ENCODE measurements at regions of chr9 and their contacts with region 1.

Region 1: DNA sequence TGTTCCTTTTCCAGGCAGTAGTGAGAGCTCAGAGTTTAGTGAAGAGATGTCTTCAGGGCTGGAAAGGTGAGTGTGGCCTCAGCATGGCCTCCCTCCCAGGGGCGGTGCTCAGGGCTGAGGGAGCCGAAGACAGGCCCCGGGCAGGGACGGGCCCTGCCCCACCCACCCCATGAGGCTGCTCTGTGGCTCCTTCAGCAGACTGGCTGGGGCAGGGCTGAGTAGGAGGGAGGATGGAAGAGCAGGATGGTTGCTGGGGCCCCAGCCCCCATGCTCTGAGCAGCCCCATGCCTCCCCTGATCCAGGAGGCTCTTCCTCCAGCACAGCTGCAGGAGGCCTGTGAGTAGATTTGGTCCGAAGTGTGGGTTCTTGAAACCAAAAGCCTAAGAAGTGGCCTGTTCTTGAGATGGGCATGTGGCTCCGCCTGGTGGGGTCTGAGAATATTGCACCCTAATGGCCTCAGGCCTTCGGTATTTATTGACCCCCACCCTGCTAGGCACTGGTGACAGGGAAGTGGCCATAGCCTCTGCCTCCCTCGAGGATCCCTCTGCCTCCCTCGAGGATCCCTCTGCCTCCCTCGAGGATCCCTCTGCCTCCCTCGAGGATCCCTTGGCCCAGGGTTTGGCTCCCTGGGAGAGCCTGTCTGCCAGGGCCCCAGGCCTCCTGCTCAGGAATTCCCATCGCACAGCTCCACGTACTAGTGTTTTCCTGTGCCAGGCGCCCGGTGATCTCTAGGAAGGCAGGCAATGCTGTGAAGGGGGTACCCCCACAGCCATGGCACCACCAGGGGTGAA is 65.4 kb upstream of the GARNL3 start:
- DNase-seq: peak; percentile 77 to 83
- H3K4me3 ChIP-seq: no peak overlapping the region
- H3K27ac ChIP-seq: no peak overlapping the region
- H3K4me1 ChIP-seq: peaks cover 27% of the 10 kb centered on the region
- H3K27me3 ChIP-seq: no peaks in the 10 kb centered on the region
- CTCF ChIP-seq: peak; percentile 97

Region 2: GRCh38 chr9:126947529-126947928 is 251.7 kb before region 1 on chr9:
- CTCF ChIA-PET with region 1: interaction called, 7 read pairs
- POLR2A ChIA-PET with region 1: no interaction called
- intact Hi-C with region 1: loop called (anchors 1 kb)
- DNase-seq: peak; percentile 50 to 61
- H3K4me3 ChIP-seq: no peak overlapping the region
- H3K27ac ChIP-seq: no peak overlapping the region
- H3K4me1 ChIP-seq: 0 out of 2 replicates have a peak, but pooled peaks cover 7% of the 10 kb centered on the region
- H3K27me3 ChIP-seq: no peaks in the 10 kb centered on the region
- CTCF ChIP-seq: peak; percentile 64

Region 3: GRCh38 chr9:126985870-126986498 is 213.2 kb before region 1 on chr9:
- CTCF ChIA-PET with region 1: interaction called, 10 read pairs
- POLR2A ChIA-PET with region 1: no interaction called
- intact Hi-C with region 1: loop called (anchors 1 kb)
- DNase-seq: peak; percentile 92 to 98
- H3K4me3 ChIP-seq: peak overlapping the region; percentile 10; the same call in 1 of the 2 replicates
- H3K27ac ChIP-seq: peak overlapping the region; percentile 87
- H3K4me1 ChIP-seq: peaks cover 48% of the 10 kb centered on the region
- H3K27me3 ChIP-seq: no peaks in the 10 kb centered on the region
- CTCF ChIP-seq: no peak; the same call in 1 of the 2 replicates

Region 4: DNA sequence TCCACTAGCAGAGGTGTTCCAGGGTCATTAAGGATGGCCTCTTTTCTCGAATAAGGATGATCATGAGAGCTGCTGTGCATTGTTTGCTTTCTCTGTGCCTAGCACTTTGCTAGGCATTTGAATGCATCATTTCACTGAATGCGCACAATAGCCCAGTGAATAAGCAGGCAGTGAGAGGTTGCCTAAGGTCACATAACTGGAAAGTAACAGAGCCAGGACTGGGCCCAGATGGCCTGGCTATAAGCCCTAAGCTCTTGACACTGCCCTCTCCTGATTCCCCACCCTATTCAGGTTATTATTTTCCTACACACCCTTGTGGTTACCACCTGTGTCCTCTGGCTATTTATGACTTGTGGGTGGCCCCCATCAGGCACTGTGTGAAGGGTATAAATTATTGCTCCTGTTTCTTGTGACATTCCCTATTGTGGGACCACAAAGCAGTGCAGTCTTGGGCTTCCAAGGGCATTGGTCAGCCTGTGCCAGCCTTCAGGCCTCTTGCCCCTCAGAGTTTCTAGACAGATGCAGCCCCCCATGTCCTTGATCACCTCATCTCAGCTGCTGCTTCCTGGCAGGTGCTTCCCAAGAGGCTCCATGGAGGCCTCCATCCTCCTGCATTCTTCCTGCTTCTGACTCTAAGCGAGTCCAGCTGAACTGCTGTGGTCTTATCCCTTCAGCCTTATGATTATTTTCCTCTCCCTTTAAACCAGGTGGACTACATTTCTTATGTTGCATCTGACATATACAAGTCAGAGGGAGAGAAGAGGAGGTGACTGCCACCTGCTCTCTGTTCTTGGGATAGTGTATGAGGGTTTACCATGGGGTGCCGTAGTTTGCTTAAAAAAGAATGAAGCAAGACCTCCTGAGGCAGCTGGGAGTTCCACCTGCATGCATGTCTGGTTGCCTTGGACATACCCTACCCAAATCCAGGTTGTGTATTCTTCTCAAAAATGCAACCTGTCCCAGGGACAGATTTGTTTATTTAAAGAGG is 124.3 kb before region 1 on chr9:
- CTCF ChIA-PET with region 1: no interaction called
- POLR2A ChIA-PET with region 1: no interaction called
- intact Hi-C with region 1: loop called (anchors 1 kb)
- DNase-seq: peak; percentile 69 to 96
- H3K4me3 ChIP-seq: no peak overlapping the region
- H3K27ac ChIP-seq: 0 out of 2 replicates have a peak overlapping the region, but pooled peaks have one; percentile 13
- H3K4me1 ChIP-seq: peaks cover 56% of the 10 kb centered on the region
- H3K27me3 ChIP-seq: no peaks in the 10 kb centered on the region
- CTCF ChIP-seq: no peak

Region 5: DNA sequence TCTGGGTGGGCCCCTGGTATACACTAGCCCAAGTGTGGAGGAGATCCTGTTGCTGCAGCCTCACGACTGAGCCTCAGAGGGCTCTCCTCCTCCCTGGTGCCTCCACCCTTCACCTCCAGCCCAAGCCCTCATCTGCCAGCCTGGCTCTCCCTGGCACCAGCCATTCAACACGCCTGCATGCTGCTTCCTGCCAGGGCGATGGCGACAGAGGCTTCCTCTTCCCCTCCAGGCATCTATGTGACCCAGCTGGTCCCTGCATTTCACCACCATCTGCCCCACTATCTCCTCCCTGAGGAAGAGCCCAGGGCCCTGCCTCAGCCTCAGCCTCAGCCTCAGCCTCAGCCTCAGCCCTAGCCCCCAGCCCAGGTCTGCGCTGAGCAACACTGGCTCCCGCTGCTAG is 22.0 kb before region 1 on chr9:
- CTCF ChIA-PET with region 1: no interaction called
- POLR2A ChIA-PET with region 1: no interaction called
- intact Hi-C with region 1: no loop called
- DNase-seq: no peak
- H3K4me3 ChIP-seq: no peak overlapping the region
- H3K27ac ChIP-seq: no peak overlapping the region
- H3K4me1 ChIP-seq: no peaks in the 10 kb centered on the region
- H3K27me3 ChIP-seq: no peaks in the 10 kb centered on the region
- CTCF ChIP-seq: no peak

Region 6: GRCh38 chr9:127187231-127187956 is 11.8 kb before region 1 on chr9:
- CTCF ChIA-PET with region 1: interaction called, 16 read pairs
- POLR2A ChIA-PET with region 1: no interaction called
- intact Hi-C with region 1: no loop called
- DNase-seq: peak; percentile 89 to 98
- H3K4me3 ChIP-seq: no peak overlapping the region
- H3K27ac ChIP-seq: peak overlapping the region; percentile 82
- H3K4me1 ChIP-seq: peaks cover 41% of the 10 kb centered on the region
- H3K27me3 ChIP-seq: no peaks in the 10 kb centered on the region
- CTCF ChIP-seq: no peak

Region 7: GRCh38 chr9:127406799-127407509 is 207.8 kb after region 1 on chr9:
- CTCF ChIA-PET with region 1: no interaction called
- POLR2A ChIA-PET with region 1: no interaction called
- intact Hi-C with region 1: no loop called
- DNase-seq: no peak
- H3K4me3 ChIP-seq: no peak overlapping the region
- H3K27ac ChIP-seq: no peak overlapping the region
- H3K4me1 ChIP-seq: no peaks in the 10 kb centered on the region
- H3K27me3 ChIP-seq: no peaks in the 10 kb centered on the region
- CTCF ChIP-seq: no peak

Measured in PC-9 (cell line).